Activated naive CD4-positive, alpha-beta T cell treated with anti-CD3 and anti-CD28 coated beads for 36 hours (primary cell): ENCODE measurements at regions of chr21 and their contacts with region 1.

Region 1: GRCh38 chr21:30502041-30502440 is at the start of gene KRTAP19-5:
- DNase-seq: no peak
- H3K4me3 Mint-ChIP-seq: no peak within 1 kb of the TSS
- H3K27ac Mint-ChIP-seq: no peak within 1 kb of the TSS
- H3K4me1 Mint-ChIP-seq: no peaks in the 10 kb centered on the region
- H3K27me3 Mint-ChIP-seq: peaks cover 4% of the 10 kb centered on the region
- total RNA-seq, gene KRTAP19-5: not detected

Region 2: DNA sequence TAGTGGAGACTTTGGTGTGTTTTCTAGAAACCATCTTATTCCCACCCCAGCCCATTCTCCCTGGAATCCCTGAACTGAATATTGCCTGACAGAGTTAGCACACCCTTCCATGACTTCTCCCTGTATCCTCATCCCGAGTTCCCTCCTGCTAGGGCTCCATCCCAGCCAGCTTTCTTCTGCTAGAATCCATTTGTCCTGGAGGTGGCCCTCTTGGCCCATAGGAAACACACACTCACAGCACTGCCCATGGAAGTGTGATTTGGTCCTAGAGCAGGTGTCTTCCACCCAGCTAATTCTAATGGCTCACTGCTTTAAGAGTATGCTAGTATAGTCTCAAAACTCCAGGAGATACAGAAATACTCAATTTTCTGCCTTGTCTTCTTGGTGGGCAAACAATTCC is 57.8 kb before region 1 on chr21:
- CTCF ChIA-PET with region 1: no interaction called
- intact Hi-C with region 1: no loop called
- DNase-seq: no peak
- H3K4me3 Mint-ChIP-seq: no peak overlapping the region
- H3K27ac Mint-ChIP-seq: no peak overlapping the region
- H3K4me1 Mint-ChIP-seq: peaks cover 2% of the 10 kb centered on the region
- H3K27me3 Mint-ChIP-seq: peaks cover 16% of the 10 kb centered on the region

Region 3: DNA sequence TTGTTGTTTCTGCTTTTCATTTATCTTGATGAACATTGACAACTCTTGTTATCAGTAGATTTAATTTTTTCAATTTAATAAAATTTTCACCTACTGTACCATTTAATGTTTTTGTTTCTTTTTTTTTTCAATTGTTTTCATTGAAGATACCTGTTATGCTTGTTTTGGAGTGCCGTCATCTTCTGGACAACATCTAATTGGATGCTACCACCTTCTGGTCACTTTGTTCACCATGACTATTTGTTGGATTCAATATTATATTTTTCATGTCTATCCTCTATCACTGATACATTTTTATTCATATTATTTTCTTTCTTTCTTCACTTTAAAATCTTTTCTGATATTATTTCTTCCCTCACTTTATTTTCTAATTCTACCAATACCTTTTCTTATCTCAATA is 231.0 kb after region 1 on chr21:
- CTCF ChIA-PET with region 1: no interaction called
- intact Hi-C with region 1: loop called (anchors 5 kb)
- DNase-seq: no peak
- H3K4me3 Mint-ChIP-seq: no peak overlapping the region
- H3K27ac Mint-ChIP-seq: no peak overlapping the region
- H3K4me1 Mint-ChIP-seq: no peaks in the 10 kb centered on the region
- H3K27me3 Mint-ChIP-seq: peaks cover 4% of the 10 kb centered on the region

Region 4: GRCh38 chr21:30839304-30839703 is 337.3 kb after region 1 on chr21:
- CTCF ChIA-PET with region 1: no interaction called
- intact Hi-C with region 1: loop called (anchors 2 kb)
- DNase-seq: peak; percentile 58
- H3K4me3 Mint-ChIP-seq: no peak overlapping the region
- H3K27ac Mint-ChIP-seq: no peak overlapping the region
- H3K4me1 Mint-ChIP-seq: no peaks in the 10 kb centered on the region
- H3K27me3 Mint-ChIP-seq: peaks cover 17% of the 10 kb centered on the region